CD4-positive, alpha-beta T cell (primary cell): ENCODE measurements at regions of chr12 and their contacts with region 1.

Region 1: DNA sequence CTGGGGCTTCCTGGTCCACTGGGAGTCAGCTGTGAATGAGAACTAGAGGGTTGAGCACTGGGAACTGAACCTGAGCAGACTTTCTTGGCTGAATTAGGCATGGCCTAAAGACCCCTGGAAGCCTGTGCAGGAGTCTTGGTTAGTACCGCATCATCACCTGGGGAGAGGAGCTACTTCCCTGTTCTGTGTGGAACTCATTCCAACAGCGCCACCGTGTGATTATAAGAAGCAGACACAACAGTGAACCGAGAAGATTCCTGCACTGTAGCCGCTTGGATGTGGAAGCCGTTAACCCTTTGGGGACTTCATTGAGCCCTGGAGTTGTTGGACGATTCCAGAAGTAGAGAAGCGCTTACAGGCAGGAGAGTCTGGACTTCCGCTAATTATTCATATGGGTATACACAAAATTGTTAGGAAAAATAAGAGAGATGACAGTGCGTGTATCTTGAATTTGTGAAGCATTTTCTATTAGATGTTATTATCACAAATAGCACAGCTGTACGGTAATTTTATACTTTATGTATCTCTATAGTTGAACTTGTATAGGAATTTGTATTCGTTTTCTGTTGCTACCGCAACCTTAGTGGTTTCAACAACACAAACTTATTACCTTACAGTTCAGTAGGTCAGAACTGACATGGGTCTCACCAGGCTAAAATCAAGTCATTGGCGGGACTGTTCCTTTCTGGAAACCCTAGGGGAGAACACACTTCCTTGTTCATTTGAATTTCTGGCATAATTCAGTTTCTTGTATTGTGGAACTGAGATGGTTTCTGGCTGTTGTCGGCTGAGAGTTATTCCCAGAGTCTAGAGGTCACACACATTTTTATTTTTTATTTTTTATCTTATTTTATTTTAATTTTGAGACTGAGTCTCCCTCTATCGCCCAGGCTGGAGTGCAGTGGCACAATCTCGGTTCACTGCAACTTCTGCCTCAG is 100.7 kb downstream of the C2CD5 start:
- DNase-seq: peak; percentile 24 to 88 (median 48)
- ATAC-seq: peak; percentile 99
- H3K4me3 ChIP-seq: no peak overlapping the region
- H3K4me3 Mint-ChIP-seq: no peak overlapping the region
- H3K27ac ChIP-seq: no peak overlapping the region
- H3K27ac Mint-ChIP-seq: no peak overlapping the region
- H3K4me1 ChIP-seq: peaks cover 6% of the 10 kb centered on the region
- H3K4me1 Mint-ChIP-seq: peaks cover 6% of the 10 kb centered on the region
- H3K27me3 ChIP-seq: no peaks in the 10 kb centered on the region
- H3K27me3 Mint-ChIP-seq: no peaks in the 10 kb centered on the region
- CTCF ChIP-seq: peak; percentile 85

Region 2: GRCh38 chr12:21607701-21608100 is 835.9 kb before region 1 on chr12:
- CTCF ChIA-PET with region 1: no interaction called
- POLR2A ChIA-PET with region 1: no interaction called
- intact Hi-C with region 1: loop called in 1 of 2 experiments (anchors 10 kb)
- DNase-seq: peak in 3 of 14 experiments; percentile 54 to 60 (median 59)
- ATAC-seq: peak; percentile 58
- H3K4me3 ChIP-seq: no peak overlapping the region
- H3K4me3 Mint-ChIP-seq: no peak overlapping the region
- H3K27ac ChIP-seq: no peak overlapping the region
- H3K27ac Mint-ChIP-seq: no peak overlapping the region
- H3K4me1 ChIP-seq: peaks cover 3% of the 10 kb centered on the region
- H3K4me1 Mint-ChIP-seq: peaks cover 7% of the 10 kb centered on the region
- H3K27me3 ChIP-seq: no peaks in the 10 kb centered on the region
- H3K27me3 Mint-ChIP-seq: no peaks in the 10 kb centered on the region
- CTCF ChIP-seq: peak; percentile 76

Region 3: DNA sequence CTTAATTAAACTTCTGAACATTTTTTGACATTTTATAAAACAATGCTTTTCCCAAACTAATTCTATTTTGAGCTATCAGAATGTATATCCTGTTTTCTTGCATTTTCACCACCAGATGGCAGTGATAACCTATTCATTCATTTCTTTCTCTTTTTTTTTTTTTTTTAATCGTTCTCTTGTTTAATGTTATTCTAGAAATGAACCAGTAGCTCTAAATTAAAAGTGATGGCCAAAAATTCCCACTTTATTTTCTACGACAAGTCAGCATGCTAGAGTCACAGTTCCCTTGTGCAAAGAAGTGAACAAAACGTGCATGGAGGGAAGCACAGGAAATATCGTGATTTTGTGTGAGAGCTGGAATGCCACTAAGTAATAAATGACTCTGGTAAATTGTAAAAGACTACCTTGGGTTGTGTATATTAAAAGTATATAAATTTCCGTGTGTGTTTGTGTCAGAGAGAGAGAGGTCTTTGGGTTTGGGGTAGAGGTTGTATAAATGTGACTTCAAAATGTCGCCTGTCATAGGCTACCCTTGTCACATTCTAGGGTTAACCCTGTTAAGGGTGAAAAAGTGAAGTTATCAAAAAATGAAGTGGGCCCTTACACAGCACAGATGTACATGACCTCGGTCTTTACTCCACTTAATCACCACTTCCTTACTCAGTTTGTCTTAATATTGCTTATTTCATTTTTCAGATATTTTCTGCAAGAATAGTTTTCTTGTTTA is 745.6 kb before region 1 on chr12:
- CTCF ChIA-PET with region 1: interaction called, 5 read pairs
- POLR2A ChIA-PET with region 1: interaction called, 3 read pairs
- intact Hi-C with region 1: loop called in 1 of 2 experiments (anchors 5 kb)
- DNase-seq: peak in 3 of 14 experiments; percentile 50 to 69 (median 69)
- ATAC-seq: no peak
- H3K4me3 ChIP-seq: no peak overlapping the region
- H3K4me3 Mint-ChIP-seq: peak overlapping the region; percentile 27
- H3K27ac ChIP-seq: no peak overlapping the region
- H3K27ac Mint-ChIP-seq: no peak overlapping the region
- H3K4me1 ChIP-seq: peaks cover 2% of the 10 kb centered on the region
- H3K4me1 Mint-ChIP-seq: peaks cover 27% of the 10 kb centered on the region
- H3K27me3 ChIP-seq: no peaks in the 10 kb centered on the region
- H3K27me3 Mint-ChIP-seq: peaks cover 5% of the 10 kb centered on the region
- CTCF ChIP-seq: peak; percentile 80

Region 4: GRCh38 chr12:22083167-22083566 is 360.5 kb before region 1 on chr12:
- CTCF ChIA-PET with region 1: interaction called, 7 read pairs
- POLR2A ChIA-PET with region 1: interaction called, 3 read pairs
- intact Hi-C with region 1: loop called (anchors 1 kb)
- DNase-seq: peak in 7 of 14 experiments; percentile 8 to 71 (median 51)
- ATAC-seq: peak; percentile 55
- H3K4me3 ChIP-seq: no peak overlapping the region
- H3K4me3 Mint-ChIP-seq: no peak overlapping the region
- H3K27ac ChIP-seq: no peak overlapping the region
- H3K27ac Mint-ChIP-seq: no peak overlapping the region
- H3K4me1 ChIP-seq: no peaks in the 10 kb centered on the region
- H3K4me1 Mint-ChIP-seq: no peaks in the 10 kb centered on the region
- H3K27me3 ChIP-seq: no peaks in the 10 kb centered on the region
- H3K27me3 Mint-ChIP-seq: no peaks in the 10 kb centered on the region
- CTCF ChIP-seq: peak; percentile 70

Region 5: DNA sequence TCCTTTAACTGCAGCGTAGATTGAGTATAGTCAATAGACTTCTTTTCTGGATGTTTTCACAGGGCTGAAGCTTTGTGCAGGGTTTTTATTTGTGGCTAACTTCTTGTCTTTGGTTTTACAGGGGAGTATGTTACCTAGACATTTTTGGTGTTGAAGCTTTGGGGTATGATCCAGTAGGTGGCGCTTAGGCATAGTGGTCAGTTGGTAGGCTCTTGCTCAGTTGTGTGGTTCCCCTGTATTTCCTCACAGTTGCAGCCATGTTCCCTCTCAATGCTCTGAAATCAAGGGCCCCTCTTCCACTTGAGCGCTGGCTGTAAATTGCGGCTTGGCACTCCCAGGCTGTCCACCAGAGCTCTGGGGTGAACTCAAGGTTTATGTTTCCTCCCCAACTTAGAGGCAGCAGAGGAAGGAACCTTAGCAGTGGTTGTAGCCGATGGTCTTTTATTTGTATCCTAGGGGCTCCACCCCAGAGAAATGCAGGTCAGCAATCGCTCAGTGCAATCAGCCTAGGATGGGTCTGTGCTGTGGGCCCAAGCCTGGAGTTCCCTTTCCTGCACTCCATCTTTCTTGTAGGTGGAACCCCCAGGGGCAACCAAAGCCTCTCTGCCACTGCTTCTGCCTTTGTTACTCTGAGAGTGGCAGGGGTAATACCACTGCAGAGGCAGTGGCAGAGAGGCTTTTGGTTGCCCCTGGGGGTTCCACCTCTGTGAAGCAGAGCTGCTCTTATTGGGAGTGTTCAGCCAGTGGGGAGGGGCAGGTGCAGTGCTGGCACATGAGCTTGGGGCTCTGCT is 342.5 kb before region 1 on chr12:
- CTCF ChIA-PET with region 1: interaction called, 6 read pairs
- POLR2A ChIA-PET with region 1: no interaction called
- intact Hi-C with region 1: loop called (anchors 5 kb)
- DNase-seq: peak in 9 of 14 experiments; percentile 10 to 76 (median 33)
- ATAC-seq: peak; percentile 48
- H3K4me3 ChIP-seq: no peak overlapping the region
- H3K4me3 Mint-ChIP-seq: no peak overlapping the region
- H3K27ac ChIP-seq: no peak overlapping the region
- H3K27ac Mint-ChIP-seq: no peak overlapping the region
- H3K4me1 ChIP-seq: peaks cover 15% of the 10 kb centered on the region
- H3K4me1 Mint-ChIP-seq: peaks cover 14% of the 10 kb centered on the region
- H3K27me3 ChIP-seq: no peaks in the 10 kb centered on the region
- H3K27me3 Mint-ChIP-seq: no peaks in the 10 kb centered on the region
- CTCF ChIP-seq: peak; percentile 66

Region 6: GRCh38 chr12:22350886-22351285 is 92.8 kb before region 1 on chr12:
- CTCF ChIA-PET with region 1: no interaction called
- POLR2A ChIA-PET with region 1: no interaction called
- intact Hi-C with region 1: no loop called
- DNase-seq: no peak
- ATAC-seq: no peak
- H3K4me3 ChIP-seq: no peak overlapping the region
- H3K4me3 Mint-ChIP-seq: no peak overlapping the region
- H3K27ac ChIP-seq: no peak overlapping the region
- H3K27ac Mint-ChIP-seq: no peak overlapping the region
- H3K4me1 ChIP-seq: no peaks in the 10 kb centered on the region
- H3K4me1 Mint-ChIP-seq: no peaks in the 10 kb centered on the region
- H3K27me3 ChIP-seq: no peaks in the 10 kb centered on the region
- H3K27me3 Mint-ChIP-seq: no peaks in the 10 kb centered on the region
- CTCF ChIP-seq: no peak

Region 7: GRCh38 chr12:22409377-22410164 is 34.1 kb before region 1 on chr12:
- CTCF ChIA-PET with region 1: interaction called, 3 read pairs
- POLR2A ChIA-PET with region 1: no interaction called
- intact Hi-C with region 1: loop called in 1 of 2 experiments (anchors 5 kb)
- DNase-seq: peak in 12 of 14 experiments; percentile 16 to 88 (median 26)
- ATAC-seq: peak; percentile 80
- H3K4me3 ChIP-seq: peak overlapping the region; percentile 38
- H3K4me3 Mint-ChIP-seq: peak overlapping the region; percentile 78
- H3K27ac ChIP-seq: peak overlapping the region; percentile 29 to 49
- H3K27ac Mint-ChIP-seq: peak overlapping the region; percentile 88
- H3K4me1 ChIP-seq: peaks cover 17% of the 10 kb centered on the region
- H3K4me1 Mint-ChIP-seq: peaks cover 20% of the 10 kb centered on the region
- H3K27me3 ChIP-seq: no peaks in the 10 kb centered on the region
- H3K27me3 Mint-ChIP-seq: no peaks in the 10 kb centered on the region
- CTCF ChIP-seq: no peak